ENCODE measurements at regions of chr1 and their contacts with region 1.

Region 1: DNA sequence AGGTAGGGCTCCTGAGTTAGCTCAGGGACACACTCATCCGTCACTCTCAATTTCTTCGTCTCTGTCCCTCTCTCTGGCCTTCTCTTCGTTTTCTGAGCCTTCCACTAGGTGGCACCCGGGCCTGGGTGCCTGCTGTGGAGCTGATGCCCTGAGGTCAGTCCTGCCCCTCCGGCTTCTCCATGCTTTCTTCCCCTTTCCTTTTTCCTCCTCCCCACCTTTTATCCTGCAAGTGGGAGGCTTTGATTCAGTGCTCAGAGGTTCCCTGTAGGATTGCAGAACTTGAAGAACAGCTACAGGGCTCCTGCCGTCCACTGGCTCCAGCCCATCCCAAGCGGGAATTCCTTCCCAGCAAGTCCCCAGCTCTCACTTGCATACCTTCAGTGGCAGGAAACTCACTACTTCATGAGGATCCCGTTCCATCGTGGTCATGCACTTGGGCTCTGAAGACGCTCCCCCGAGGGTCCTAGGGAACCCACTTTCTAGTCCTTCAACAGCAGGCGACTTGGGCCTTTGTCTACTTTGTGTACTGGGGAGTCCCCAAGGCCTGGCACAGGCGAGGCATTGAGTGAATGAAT is 45.6 kb downstream of the SRRM1 start:
- DNase-seq: peak; percentile 78
- ATAC-seq: peak; percentile 90 to 95
- H3K4me3 ChIP-seq: no peak overlapping the region
- H3K27ac ChIP-seq: no peak overlapping the region
- H3K4me1 ChIP-seq: peaks cover 27% of the 10 kb centered on the region
- H3K27me3 ChIP-seq: no peaks in the 10 kb centered on the region
- CTCF ChIP-seq: peak; percentile 86

Region 2: GRCh38 chr1:24830680-24831272 is 142.1 kb after region 1 on chr1:
- intact Hi-C with region 1: loop called (anchors 5 kb)
- DNase-seq: no peak
- ATAC-seq: peak; percentile 76 to 89
- H3K4me3 ChIP-seq: no peak overlapping the region
- H3K27ac ChIP-seq: no peak overlapping the region
- H3K4me1 ChIP-seq: peaks cover 59% of the 10 kb centered on the region
- H3K27me3 ChIP-seq: no peaks in the 10 kb centered on the region
- CTCF ChIP-seq: peak; percentile 74

Measured in lower lobe of right lung (tissue), 2 donors.